ENCODE measurements at regions of chr19 and their contacts with region 1.

Region 1: GRCh38 chr19:54481322-54481930 is 8.3 kb upstream of the CDC42EP5 start:
- DNase-seq: peak; percentile 37
- H3K4me3 ChIP-seq: no peak overlapping the region
- H3K27ac ChIP-seq: no peak overlapping the region
- H3K4me1 ChIP-seq: no peaks in the 10 kb centered on the region
- H3K27me3 ChIP-seq: no peaks in the 10 kb centered on the region
- CTCF ChIP-seq: peak; percentile 34

Region 2: DNA sequence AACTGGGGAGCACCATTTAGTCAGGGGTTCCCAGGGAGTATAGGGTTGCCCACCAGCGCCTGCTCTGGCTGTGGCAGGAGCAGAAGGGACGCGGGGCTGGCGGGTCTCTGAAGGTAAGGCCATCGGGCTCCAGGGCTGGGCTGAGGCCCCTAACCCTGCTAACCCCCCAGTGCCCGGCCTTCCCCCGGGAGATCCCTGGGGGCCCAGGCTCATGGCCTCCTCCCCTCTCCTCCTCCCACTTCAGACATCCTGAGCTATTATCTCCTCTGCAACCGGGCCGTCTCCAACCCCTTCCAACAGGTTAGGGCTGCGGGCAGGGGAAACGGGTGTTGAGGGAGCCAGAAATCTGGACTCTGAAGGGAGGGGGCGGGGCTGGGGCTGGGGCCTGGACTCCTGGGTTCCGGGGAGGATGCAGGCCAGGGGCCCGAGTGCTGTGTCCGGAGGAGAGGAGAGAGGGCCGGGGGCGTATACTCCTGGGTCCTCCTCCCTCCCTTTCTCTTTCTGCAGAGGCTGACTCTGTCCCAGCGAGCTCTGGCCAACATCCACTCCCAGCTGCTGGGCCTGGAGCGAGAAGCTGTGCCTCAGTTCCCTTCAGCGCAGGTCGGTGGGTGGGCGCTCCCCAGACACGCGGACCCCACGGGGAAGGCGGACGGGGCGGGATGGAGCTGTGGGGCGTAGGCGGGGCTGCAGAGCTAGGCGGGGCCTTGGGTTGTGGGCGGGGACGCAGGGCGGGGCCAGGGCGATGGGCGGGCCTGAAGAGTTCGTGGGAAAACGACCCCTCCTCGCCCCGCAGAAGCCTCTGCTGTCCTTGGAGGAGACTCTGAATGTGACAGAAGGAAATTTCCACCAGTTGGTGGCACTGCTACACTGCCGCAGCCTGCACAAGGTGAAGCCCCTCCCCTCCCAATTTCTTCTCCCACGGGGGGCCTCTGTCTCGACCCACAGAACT is 50.8 kb before region 1 on chr19:
- intact Hi-C with region 1: no loop called
- DNase-seq: no peak
- H3K4me3 ChIP-seq: peak overlapping the region; percentile 5
- H3K27ac ChIP-seq: no peak overlapping the region
- H3K4me1 ChIP-seq: no peaks in the 10 kb centered on the region
- H3K27me3 ChIP-seq: peaks cover 14% of the 10 kb centered on the region
- CTCF ChIP-seq: no peak

Region 3: GRCh38 chr19:54677217-54677616 is 195.8 kb after region 1 on chr19:
- intact Hi-C with region 1: loop called (anchors 5 kb)
- DNase-seq: no peak
- H3K4me3 ChIP-seq: no peak overlapping the region
- H3K27ac ChIP-seq: no peak overlapping the region
- H3K4me1 ChIP-seq: no peaks in the 10 kb centered on the region
- H3K27me3 ChIP-seq: no peaks in the 10 kb centered on the region
- CTCF ChIP-seq: no peak